Activated CD4-positive, alpha-beta memory T cell treated with anti-CD3 and anti-CD28 coated beads, Interleukin-2, amount 10 ng/mL, durations not matched to agents 7 days and 5 days (primary cell): ENCODE measurements at regions of chr10 and their contacts with region 1.

Region 1: GRCh38 chr10:110296966-110297365 is 7.8 kb downstream of the SMNDC1 start:
- DNase-seq: no peak
- H3K4me3 Mint-ChIP-seq: no peak overlapping the region
- H3K27ac Mint-ChIP-seq: no peak overlapping the region
- H3K4me1 Mint-ChIP-seq: peaks cover 42% of the 10 kb centered on the region
- H3K27me3 Mint-ChIP-seq: no peaks in the 10 kb centered on the region

Region 2: DNA sequence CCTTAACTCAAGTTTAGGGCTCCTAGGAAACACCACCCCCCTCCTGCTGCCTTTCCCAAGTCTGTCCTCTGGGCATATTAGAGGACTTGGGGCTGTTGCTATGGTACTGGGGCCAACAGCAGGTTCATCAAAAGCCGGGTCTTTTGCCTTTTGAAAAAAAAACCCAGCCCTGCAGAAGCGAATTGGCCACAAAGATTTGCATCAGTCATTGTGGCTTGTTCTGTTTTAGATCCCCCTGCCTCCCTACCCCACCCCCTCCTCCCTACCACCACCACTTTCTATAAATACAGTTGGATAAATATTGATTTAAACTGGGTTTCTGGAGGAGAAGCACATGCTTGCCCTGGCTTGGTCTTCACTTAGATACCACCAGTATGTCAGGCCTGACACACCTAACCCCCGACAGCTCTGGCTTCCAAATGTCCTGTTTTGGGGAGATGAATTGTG is 82.6 kb before region 1 on chr10:
- CTCF ChIA-PET with region 1: no interaction called
- POLR2A ChIA-PET with region 1: no interaction called
- DNase-seq: no peak
- H3K4me3 Mint-ChIP-seq: no peak overlapping the region
- H3K27ac Mint-ChIP-seq: no peak overlapping the region
- H3K4me1 Mint-ChIP-seq: peaks cover 67% of the 10 kb centered on the region
- H3K27me3 Mint-ChIP-seq: no peaks in the 10 kb centered on the region

Region 3: DNA sequence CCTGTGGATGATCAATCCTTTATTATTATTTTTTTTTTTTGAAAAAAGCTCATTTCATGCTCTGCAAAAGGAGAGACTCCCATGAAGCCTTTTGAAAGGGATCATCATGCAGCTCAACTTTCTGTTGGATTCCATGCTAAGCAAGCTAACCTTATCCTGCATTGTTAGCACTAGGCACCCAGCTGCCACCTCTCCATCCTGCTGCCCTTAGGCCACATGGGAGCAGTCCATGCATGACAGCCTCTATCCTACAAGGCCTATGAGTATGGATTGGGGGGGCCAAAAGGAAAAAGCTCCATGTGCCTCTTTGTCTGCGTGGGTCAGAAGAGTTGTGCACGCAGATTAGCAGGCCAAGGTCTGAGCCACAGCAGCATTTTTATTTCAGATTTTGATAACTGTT is 11.5 kb before region 1 on chr10:
- CTCF ChIA-PET with region 1: interaction called, 4 read pairs
- POLR2A ChIA-PET with region 1: interaction called, 10 read pairs
- DNase-seq: no peak
- H3K4me3 Mint-ChIP-seq: no peak overlapping the region
- H3K27ac Mint-ChIP-seq: no peak overlapping the region
- H3K4me1 Mint-ChIP-seq: peaks cover 3% of the 10 kb centered on the region
- H3K27me3 Mint-ChIP-seq: no peaks in the 10 kb centered on the region